ENCODE measurements at regions of chr5 and their contacts with region 1.

Region 1: DNA sequence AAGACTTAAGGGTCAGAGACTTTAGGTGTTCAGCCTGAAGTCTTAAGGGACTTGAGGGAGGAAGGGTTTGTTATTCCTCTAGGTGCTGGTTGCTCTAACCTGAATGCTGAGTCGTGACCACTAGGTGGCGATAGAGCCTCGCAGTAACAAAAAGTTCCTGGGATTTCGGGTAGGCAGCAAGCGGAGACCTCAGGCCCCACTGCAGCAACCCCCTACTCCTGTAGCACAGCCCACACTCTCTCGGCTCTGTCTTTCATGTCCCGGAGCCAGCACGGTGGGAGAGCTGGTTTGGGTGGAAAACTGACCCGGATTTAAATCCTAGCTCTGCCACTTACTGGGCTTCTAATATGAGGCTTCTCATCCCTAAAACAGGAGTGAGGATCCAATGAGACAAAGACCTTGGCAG is 100.3 kb upstream of the PANK3 start:
- DNase-seq: peak; percentile 73
- H3K4me3 Mint-ChIP-seq: no peak overlapping the region
- H3K27ac Mint-ChIP-seq: no peak overlapping the region
- H3K4me1 Mint-ChIP-seq: peaks cover 14% of the 10 kb centered on the region
- H3K27me3 Mint-ChIP-seq: no peaks in the 10 kb centered on the region

Region 2: GRCh38 chr5:168472329-168472728 is 207.2 kb before region 1 on chr5:
- CTCF ChIA-PET with region 1: no interaction called
- DNase-seq: no peak
- H3K4me3 Mint-ChIP-seq: no peak overlapping the region
- H3K27ac Mint-ChIP-seq: no peak overlapping the region
- H3K4me1 Mint-ChIP-seq: peaks cover 2% of the 10 kb centered on the region
- H3K27me3 Mint-ChIP-seq: no peaks in the 10 kb centered on the region

Region 3: GRCh38 chr5:168494057-168494555 is 185.4 kb before region 1 on chr5:
- CTCF ChIA-PET with region 1: no interaction called
- DNase-seq: no peak
- H3K4me3 Mint-ChIP-seq: no peak overlapping the region
- H3K27ac Mint-ChIP-seq: no peak overlapping the region
- H3K4me1 Mint-ChIP-seq: peaks cover 9% of the 10 kb centered on the region
- H3K27me3 Mint-ChIP-seq: no peaks in the 10 kb centered on the region

Region 4: DNA sequence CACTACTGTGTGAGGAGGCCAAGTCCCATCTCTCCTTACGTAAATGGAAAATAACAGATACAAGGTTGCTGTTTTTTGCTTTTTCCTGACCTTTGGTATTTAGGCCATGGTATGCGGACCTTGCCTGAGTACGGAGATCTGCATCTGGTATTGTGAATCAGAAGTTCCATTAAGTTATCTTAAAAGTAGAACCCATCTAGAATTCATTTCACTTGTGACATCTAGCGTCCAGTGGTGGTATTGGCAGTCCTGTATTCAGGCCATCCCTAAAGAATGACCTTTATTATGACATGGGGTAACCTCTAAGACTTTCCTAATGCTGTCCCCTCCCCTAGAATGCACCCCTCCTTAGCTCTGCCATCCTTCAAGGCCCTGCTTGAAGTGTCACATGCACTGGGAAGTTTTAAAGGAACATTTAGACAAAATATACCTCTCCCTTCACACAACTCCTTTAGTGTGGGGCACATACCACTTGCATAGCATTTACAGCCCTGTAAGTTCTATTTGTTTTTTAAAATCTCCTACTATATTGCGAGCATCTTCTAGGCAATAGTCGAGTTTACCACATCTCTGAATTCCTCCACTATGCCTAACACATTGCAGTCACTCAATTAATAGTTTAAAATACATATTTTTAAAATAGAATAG is 902.2 kb after region 1 on chr5:
- CTCF ChIA-PET with region 1: interaction called, 11 read pairs
- DNase-seq: peak; percentile 72
- H3K4me3 Mint-ChIP-seq: peak overlapping the region; percentile 7
- H3K27ac Mint-ChIP-seq: no peak overlapping the region
- H3K4me1 Mint-ChIP-seq: peaks cover 34% of the 10 kb centered on the region
- H3K27me3 Mint-ChIP-seq: peaks cover 15% of the 10 kb centered on the region